Right cardiac atrium (tissue), 5 donors: ENCODE measurements at regions of chr4 and their contacts with region 1.

Region 1: DNA sequence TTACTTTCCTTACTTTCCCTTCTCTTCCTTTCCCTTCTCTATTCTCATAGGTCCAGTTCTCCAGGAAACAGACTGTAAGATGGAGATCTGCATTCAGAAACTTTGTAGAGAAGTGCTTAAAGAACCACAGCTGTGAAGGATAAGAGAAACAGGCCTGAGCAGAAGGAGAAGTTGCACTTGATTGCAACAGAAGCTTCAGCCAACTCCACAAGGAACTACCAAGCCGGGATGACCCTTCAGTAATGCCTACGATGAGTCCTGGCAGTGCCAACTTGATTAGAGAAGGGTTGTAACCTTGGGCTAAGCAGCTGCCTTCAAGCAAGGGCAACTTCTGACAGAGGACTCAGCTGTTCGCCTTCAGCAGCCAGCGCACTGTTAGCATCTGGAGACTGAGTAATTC is 413.3 kb upstream of the RASGEF1B start:
- DNase-seq: no peak
- ATAC-seq: no peak
- H3K4me3 ChIP-seq: no peak overlapping the region
- H3K27ac ChIP-seq: no peak overlapping the region
- H3K4me1 ChIP-seq: no peaks in the 10 kb centered on the region
- H3K27me3 ChIP-seq: no peaks in the 10 kb centered on the region

Region 2: DNA sequence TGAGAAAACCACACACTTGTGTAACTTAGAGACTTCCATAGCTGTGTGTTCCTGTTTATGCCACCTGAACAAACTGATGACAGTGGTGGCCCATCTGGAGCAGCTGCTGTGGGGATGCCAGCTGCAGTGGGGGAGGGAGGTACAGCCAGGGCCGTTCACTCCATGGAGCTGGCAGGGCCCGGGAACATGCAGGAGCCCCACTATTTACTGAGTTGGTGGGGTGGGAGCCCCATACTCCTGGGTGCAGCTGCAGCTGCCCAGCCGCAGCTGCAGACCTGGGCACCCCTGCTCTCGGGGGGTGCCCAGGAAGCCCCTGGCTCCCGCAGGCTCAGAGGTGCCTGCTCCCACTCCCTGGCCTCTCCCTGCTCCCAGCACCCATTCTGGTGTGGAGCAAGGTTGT is 14.7 kb before region 1 on chr4:
- intact Hi-C with region 1: loop called in 1 of 4 experiments (anchors 2 kb)
- DNase-seq: peak in 1 of 3 donors; percentile 23
- ATAC-seq: no peak
- H3K4me3 ChIP-seq: no peak overlapping the region
- H3K27ac ChIP-seq: no peak overlapping the region
- H3K4me1 ChIP-seq: no peaks in the 10 kb centered on the region
- H3K27me3 ChIP-seq: no peaks in the 10 kb centered on the region